ENCODE measurements at regions of chr2 and their contacts with region 1.

Region 1: GRCh38 chr2:218659258-218659987 is at the starts of genes BCS1L and ZNF142:
- DNase-seq: peak; percentile 48
- H3K4me3 ChIP-seq: peak within 1 kb of the TSS; percentile 91
- H3K27ac ChIP-seq: peak within 1 kb of the TSS; percentile 39
- H3K27me3 ChIP-seq: no peaks in the 10 kb centered on the region
- CTCF ChIP-seq: no peak
- polyA plus RNA-seq, gene BCS1L: 26.7 and 28.4 TPM in 2 replicates
- polyA plus RNA-seq, gene ZNF142: 3.5 and 5.5 TPM in 2 replicates

Region 2: GRCh38 chr2:218229239-218229638 is 430.2 kb before region 1 on chr2:
- CTCF ChIA-PET with region 1: no interaction called
- POLR2A ChIA-PET with region 1: no interaction called
- DNase-seq: peak; percentile 62
- H3K4me3 ChIP-seq: no peak overlapping the region
- H3K27ac ChIP-seq: no peak overlapping the region
- H3K27me3 ChIP-seq: no peaks in the 10 kb centered on the region
- CTCF ChIP-seq: no peak

Region 3: GRCh38 chr2:218529990-218530389 is 129.4 kb before region 1 on chr2:
- CTCF ChIA-PET with region 1: no interaction called
- POLR2A ChIA-PET with region 1: no interaction called
- DNase-seq: no peak
- H3K4me3 ChIP-seq: no peak overlapping the region
- H3K27ac ChIP-seq: no peak overlapping the region
- H3K27me3 ChIP-seq: no peaks in the 10 kb centered on the region
- CTCF ChIP-seq: no peak

Region 4: DNA sequence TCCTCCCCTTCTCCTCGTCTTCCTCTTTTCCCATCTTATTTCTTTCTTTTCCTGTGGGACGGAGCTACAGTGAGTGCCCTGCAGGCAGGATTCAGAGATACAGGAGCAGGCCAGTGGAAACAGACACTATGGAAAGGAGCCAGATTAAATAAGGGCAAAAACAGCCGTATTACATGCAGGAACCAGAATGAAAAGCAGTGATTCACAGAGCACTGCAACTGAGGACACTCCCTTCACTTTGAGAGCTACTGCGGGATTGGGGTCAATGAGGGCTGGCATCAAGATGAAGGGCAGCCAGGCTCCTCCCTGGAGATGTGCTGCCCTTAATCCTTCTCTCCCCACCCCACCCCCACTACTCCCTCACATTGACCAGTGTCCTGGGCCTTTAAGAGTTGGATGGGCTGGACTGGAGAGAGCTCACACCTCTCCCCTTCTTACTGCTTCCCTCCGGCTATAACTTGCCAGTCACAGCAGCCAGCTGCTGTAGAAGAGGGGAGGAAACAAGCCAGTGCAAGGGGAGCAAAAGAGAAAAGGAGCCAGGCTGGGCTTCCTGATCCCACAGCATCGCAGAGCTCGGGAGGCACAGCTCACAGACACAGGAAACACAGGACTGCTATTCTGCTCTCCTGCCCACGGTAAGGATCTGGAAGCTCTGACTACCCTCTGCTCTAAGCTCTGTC is 51.8 kb before region 1 on chr2 and contains the start of gene PLCD4:
- CTCF ChIA-PET with region 1: no interaction called
- POLR2A ChIA-PET with region 1: interaction called, 11 read pairs
- DNase-seq: peak; percentile 27
- H3K4me3 ChIP-seq: peak within 1 kb of the TSS; percentile 51
- H3K27ac ChIP-seq: peak within 1 kb of the TSS; percentile 21
- H3K27me3 ChIP-seq: peaks cover under 1% of the 10 kb centered on the region
- CTCF ChIP-seq: no peak
- polyA plus RNA-seq, gene PLCD4: 4.7 and 4.9 TPM in 2 replicates

Region 5: GRCh38 chr2:218648088-218648786 is 11.2 kb before region 1 on chr2:
- CTCF ChIA-PET with region 1: interaction called, 32 read pairs
- POLR2A ChIA-PET with region 1: no interaction called
- DNase-seq: peak; percentile 49
- H3K4me3 ChIP-seq: no peak overlapping the region
- H3K27ac ChIP-seq: no peak overlapping the region
- H3K27me3 ChIP-seq: no peaks in the 10 kb centered on the region
- CTCF ChIP-seq: peak; percentile 86

Region 6: DNA sequence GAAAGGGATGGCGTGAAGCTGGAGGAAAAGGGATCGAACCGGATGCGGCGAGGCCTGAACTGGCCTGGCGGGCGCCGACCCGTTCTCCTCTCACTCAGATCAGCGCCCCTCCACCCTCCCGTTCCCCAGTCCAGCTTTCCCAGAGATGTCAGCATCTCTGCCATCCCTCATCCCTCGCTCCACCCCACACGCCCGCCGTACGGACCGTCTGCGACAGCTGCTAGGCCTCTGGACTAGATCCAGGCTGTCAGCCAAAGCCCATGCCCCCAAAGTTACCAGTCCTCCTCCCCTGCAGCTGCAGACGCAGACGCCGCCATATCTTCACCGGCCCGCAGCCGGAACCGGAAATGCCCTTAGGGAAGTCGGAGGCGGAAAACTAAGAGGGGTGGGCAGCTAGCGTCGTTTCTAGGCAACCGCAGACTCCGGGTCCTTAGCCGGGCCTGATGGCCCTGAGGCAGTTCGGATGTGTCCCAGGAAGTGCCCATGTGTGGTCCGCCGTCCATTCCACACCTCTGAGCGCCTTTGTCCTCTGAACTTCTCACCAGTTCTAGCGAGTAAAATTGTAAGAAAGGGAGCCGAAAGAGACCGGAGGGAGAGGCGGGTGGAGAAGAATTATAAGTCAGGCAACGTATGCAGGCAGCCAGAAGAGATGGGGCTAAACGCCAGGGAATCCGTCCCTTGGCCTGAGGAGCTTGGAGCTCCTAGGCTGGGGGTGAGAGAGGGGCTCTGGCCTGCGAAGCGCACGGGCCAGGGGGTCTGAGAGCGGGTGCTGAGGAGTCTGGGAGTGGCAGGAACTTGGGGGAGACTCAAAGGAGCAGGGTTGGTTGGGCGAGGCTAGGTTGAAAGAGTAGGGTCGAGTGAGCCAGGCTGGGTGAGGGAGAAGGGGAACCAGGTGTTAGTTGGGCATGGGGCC is 12.5 kb after region 1 on chr2 and contains the starts of genes RNF25 and STK36:
- CTCF ChIA-PET with region 1: interaction called, 9 read pairs
- POLR2A ChIA-PET with region 1: interaction called, 24 read pairs
- DNase-seq: peak; percentile 74
- H3K4me3 ChIP-seq: peak within 1 kb of the TSS; percentile 95
- H3K27ac ChIP-seq: peak within 1 kb of the TSS; percentile 77
- H3K27me3 ChIP-seq: no peaks in the 10 kb centered on the region
- CTCF ChIP-seq: no peak
- polyA plus RNA-seq, gene RNF25: 57.5 and 76.3 TPM in 2 replicates
- polyA plus RNA-seq, gene STK36: 52.5 and 53.1 TPM in 2 replicates